ENCODE measurements at regions of chr18 and their contacts with region 1.

Region 1: DNA sequence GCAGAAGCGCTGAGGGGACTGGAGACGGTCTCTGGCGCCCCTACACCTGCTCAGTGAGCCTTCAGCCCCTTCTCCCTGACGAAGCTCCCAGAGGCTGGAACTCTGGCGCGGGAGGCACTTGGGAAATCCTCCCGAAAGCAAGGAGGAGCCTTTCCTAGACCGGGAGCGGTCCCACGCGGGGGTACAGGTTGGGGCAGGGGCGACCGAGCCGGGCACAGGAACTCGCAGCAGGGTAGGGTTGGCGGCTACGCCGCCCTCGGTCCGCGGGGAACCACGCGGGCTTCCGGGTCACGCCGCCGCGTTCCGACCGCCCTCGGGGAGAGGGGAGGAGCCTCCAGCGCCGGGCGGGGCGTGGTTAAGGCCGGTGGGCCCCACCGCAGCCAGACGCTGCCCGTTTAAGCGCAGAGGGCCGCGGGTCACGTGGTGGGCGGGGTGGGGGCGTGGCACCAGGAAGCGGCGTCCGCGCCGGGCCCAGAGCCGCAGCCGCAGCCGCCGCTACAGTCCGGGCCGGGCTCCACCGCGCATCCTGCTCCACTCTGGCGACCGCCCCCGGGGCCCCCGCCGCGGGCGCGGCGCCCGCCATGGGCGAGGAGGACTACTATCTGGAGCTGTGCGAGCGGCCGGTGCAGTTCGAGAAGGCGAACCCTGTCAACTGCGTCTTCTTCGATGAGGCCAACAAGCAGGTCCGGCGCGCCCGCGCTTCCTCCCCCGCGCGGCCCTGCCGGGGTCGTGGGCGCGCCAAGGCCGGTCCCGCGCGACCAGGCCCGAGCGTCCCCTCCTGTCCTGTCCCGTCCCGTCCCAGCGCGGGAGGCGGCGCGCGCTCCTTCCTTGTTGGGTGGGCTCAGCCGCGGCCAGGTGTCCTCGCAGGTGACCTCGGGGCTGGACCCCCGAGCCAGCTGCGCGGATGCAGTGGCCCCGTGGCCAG is at the start of gene RMC1:
- DNase-seq: peak; percentile 91 to 99 (median 95)
- ATAC-seq: peak; percentile 96
- H3K4me3 ChIP-seq: peak within 1 kb of the TSS; percentile 95
- H3K4me3 Mint-ChIP-seq: peak within 1 kb of the TSS; percentile 91 to 99 (median 96)
- H3K27ac ChIP-seq: peak within 1 kb of the TSS; percentile 88
- H3K27ac Mint-ChIP-seq: peak within 1 kb of the TSS; percentile 93 to 99 (median 96)
- H3K4me1 ChIP-seq: peaks cover 22% of the 10 kb centered on the region in 2 donors
- H3K4me1 Mint-ChIP-seq: peaks cover 28 to 70% (median 64%) of the 10 kb centered on the region in 7 donors
- H3K27me3 ChIP-seq: no peaks in the 10 kb centered on the region
- H3K27me3 Mint-ChIP-seq: no peaks in the 10 kb centered on the region
- total RNA-seq, gene RMC1: 45.7 to 59.7 (median 50.0) TPM

Region 2: DNA sequence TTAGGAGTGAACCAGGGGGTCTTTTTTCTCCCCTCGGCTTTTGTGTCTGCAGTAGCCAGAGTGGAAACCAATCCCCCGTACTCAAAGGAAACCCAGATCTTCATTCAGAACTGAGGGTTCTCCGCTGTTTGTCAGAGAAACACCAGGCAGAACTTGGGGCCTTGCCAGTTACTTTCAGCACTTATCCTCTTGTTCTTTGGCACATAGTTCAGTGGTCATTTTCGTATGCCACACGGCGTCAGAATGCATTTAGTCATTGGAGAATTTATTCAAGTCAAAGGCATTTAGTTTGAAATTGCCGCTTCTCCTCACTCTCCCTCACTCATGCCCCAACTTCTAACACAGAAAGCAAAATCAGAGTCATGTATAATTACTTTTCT is 265.2 kb before region 1 on chr18:
- CTCF ChIA-PET with region 1: no interaction called
- POLR2A ChIA-PET with region 1: no interaction called
- intact Hi-C with region 1: no loop called
- DNase-seq: no peak
- ATAC-seq: no peak
- H3K4me3 ChIP-seq: peak overlapping the region; percentile 30
- H3K4me3 Mint-ChIP-seq: peak overlapping the region; percentile 61 to 90 (median 82)
- H3K27ac ChIP-seq: peak overlapping the region; percentile 53
- H3K27ac Mint-ChIP-seq: peak overlapping the region in 8 of 9 donors; percentile 60 to 97 (median 82)
- H3K4me1 ChIP-seq: peaks cover 4 to 11% of the 10 kb centered on the region in 2 donors
- H3K4me1 Mint-ChIP-seq: peaks cover 4 to 68% (median 17%) of the 10 kb centered on the region in 7 donors
- H3K27me3 ChIP-seq: no peaks in the 10 kb centered on the region
- H3K27me3 Mint-ChIP-seq: no peaks in the 10 kb centered on the region

Region 3: GRCh38 chr18:23291456-23292205 is 211.7 kb before region 1 on chr18:
- CTCF ChIA-PET with region 1: no interaction called
- POLR2A ChIA-PET with region 1: no interaction called
- intact Hi-C with region 1: no loop called
- DNase-seq: no peak
- ATAC-seq: no peak
- H3K4me3 ChIP-seq: no peak overlapping the region
- H3K4me3 Mint-ChIP-seq: no peak overlapping the region
- H3K27ac ChIP-seq: no peak overlapping the region
- H3K27ac Mint-ChIP-seq: no peak overlapping the region
- H3K4me1 ChIP-seq: no peaks in the 10 kb centered on the region
- H3K4me1 Mint-ChIP-seq: no peaks in the 10 kb centered on the region
- H3K27me3 ChIP-seq: no peaks in the 10 kb centered on the region
- H3K27me3 Mint-ChIP-seq: no peaks in the 10 kb centered on the region

Region 4: DNA sequence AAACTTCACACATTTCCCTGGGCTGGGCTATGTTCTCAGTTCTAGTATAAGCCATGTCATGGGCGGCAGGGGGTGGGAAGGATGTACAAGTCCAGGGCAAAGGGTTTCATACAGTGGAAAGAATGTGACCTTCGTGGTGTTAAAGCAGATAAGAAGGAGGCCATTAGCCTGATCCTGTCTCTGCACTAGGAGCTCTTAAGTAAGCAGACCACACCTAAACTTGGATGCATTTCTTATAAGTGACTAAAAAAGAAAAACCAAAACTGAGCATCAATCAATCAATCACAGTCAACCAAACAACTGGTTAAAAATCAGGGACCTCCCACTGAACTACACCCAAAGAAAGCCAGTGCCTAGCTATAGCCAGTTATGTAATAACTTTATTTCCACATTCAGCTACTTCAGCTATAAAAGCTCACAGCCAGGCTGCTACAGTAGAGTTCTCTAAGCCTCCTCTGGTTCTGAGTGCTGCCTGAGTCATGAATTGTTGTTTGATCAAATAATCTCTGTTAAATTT is 97.0 kb before region 1 on chr18:
- CTCF ChIA-PET with region 1: no interaction called
- POLR2A ChIA-PET with region 1: no interaction called
- intact Hi-C with region 1: loop called in 1 of 2 experiments (anchors 1 kb)
- DNase-seq: no peak
- ATAC-seq: no peak
- H3K4me3 ChIP-seq: no peak overlapping the region
- H3K4me3 Mint-ChIP-seq: no peak overlapping the region
- H3K27ac ChIP-seq: no peak overlapping the region
- H3K27ac Mint-ChIP-seq: no peak overlapping the region
- H3K4me1 ChIP-seq: no peaks in the 10 kb centered on the region
- H3K4me1 Mint-ChIP-seq: peaks cover 0 to 7% (median 1%) of the 10 kb centered on the region in 7 donors
- H3K27me3 ChIP-seq: no peaks in the 10 kb centered on the region
- H3K27me3 Mint-ChIP-seq: no peaks in the 10 kb centered on the region

Region 5: GRCh38 chr18:23515911-23516546 is 12.7 kb after region 1 on chr18:
- CTCF ChIA-PET with region 1: interaction called, 10 read pairs
- POLR2A ChIA-PET with region 1: interaction called, 3 read pairs
- intact Hi-C with region 1: loop called (anchors 1 kb)
- DNase-seq: peak; percentile 39 to 76 (median 69)
- ATAC-seq: peak; percentile 99
- H3K4me3 ChIP-seq: no peak overlapping the region
- H3K4me3 Mint-ChIP-seq: no peak overlapping the region
- H3K27ac ChIP-seq: no peak overlapping the region
- H3K27ac Mint-ChIP-seq: peak overlapping the region; percentile 1 to 81 (median 66)
- H3K4me1 ChIP-seq: peaks cover 0 to 6% of the 10 kb centered on the region in 2 donors
- H3K4me1 Mint-ChIP-seq: peaks cover 7 to 37% (median 13%) of the 10 kb centered on the region in 7 donors
- H3K27me3 ChIP-seq: no peaks in the 10 kb centered on the region
- H3K27me3 Mint-ChIP-seq: no peaks in the 10 kb centered on the region

Region 6: GRCh38 chr18:23710068-23710527 is 206.8 kb after region 1 on chr18:
- CTCF ChIA-PET with region 1: no interaction called
- POLR2A ChIA-PET with region 1: no interaction called
- intact Hi-C with region 1: loop called in 1 of 2 experiments (anchors 5 kb)
- DNase-seq: no peak
- ATAC-seq: no peak
- H3K4me3 ChIP-seq: no peak overlapping the region
- H3K4me3 Mint-ChIP-seq: no peak overlapping the region
- H3K27ac ChIP-seq: no peak overlapping the region
- H3K27ac Mint-ChIP-seq: no peak overlapping the region
- H3K4me1 ChIP-seq: peaks cover 6 to 12% of the 10 kb centered on the region in 2 donors
- H3K4me1 Mint-ChIP-seq: peaks cover 13 to 24% (median 17%) of the 10 kb centered on the region in 7 donors
- H3K27me3 ChIP-seq: no peaks in the 10 kb centered on the region
- H3K27me3 Mint-ChIP-seq: peaks cover 0 to 30% (median 6%) of the 10 kb centered on the region in 5 donors

Region 7: DNA sequence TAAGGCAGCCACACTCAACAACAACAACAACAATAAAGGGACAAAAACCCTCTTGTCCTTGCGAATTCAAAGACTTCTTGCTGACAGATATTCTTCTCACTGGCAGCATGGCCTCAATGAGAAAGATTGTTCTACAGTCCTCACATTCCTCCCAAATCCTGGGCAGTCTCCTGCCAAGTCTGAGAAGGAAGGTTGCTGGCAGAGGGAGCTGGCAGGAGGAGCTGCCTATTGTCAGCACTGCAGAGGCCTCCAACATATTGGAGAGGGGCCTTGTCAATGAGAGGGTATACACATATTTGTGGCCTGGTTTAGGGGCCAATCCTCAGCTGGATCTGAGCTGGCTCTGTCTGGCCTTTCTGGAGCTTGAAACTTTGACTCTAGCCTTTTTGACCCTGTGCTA is 249.5 kb after region 1 on chr18:
- CTCF ChIA-PET with region 1: no interaction called
- POLR2A ChIA-PET with region 1: no interaction called
- intact Hi-C with region 1: no loop called
- DNase-seq: no peak
- ATAC-seq: no peak
- H3K4me3 ChIP-seq: no peak overlapping the region
- H3K4me3 Mint-ChIP-seq: no peak overlapping the region
- H3K27ac ChIP-seq: no peak overlapping the region
- H3K27ac Mint-ChIP-seq: no peak overlapping the region
- H3K4me1 ChIP-seq: no peaks in the 10 kb centered on the region
- H3K4me1 Mint-ChIP-seq: peaks cover 0 to 6% (median 0%) of the 10 kb centered on the region in 7 donors
- H3K27me3 ChIP-seq: no peaks in the 10 kb centered on the region
- H3K27me3 Mint-ChIP-seq: peaks cover 5 to 33% (median 12%) of the 10 kb centered on the region in 5 donors

Region 8: GRCh38 chr18:24014062-24014985 is 511.0 kb after region 1 on chr18 and contains the start of gene TTC39C:
- CTCF ChIA-PET with region 1: no interaction called
- POLR2A ChIA-PET with region 1: no interaction called
- intact Hi-C with region 1: loop called (anchors 1 to 2 kb)
- DNase-seq: peak; percentile 60 to 90 (median 74)
- ATAC-seq: peak; percentile 71
- H3K4me3 ChIP-seq: peak within 1 kb of the TSS; percentile 86
- H3K4me3 Mint-ChIP-seq: peak within 1 kb of the TSS; percentile 93 to 100 (median 98)
- H3K27ac ChIP-seq: peak within 1 kb of the TSS; percentile 84
- H3K27ac Mint-ChIP-seq: peak within 1 kb of the TSS; percentile 92 to 98 (median 95)
- H3K4me1 ChIP-seq: peaks cover 72 to 80% of the 10 kb centered on the region in 2 donors
- H3K4me1 Mint-ChIP-seq: peaks cover 58 to 84% (median 72%) of the 10 kb centered on the region in 7 donors
- H3K27me3 ChIP-seq: no peaks in the 10 kb centered on the region
- H3K27me3 Mint-ChIP-seq: no peaks in the 10 kb centered on the region
- total RNA-seq, gene TTC39C: 84.1 to 98.8 (median 91.4) TPM

Region 9: DNA sequence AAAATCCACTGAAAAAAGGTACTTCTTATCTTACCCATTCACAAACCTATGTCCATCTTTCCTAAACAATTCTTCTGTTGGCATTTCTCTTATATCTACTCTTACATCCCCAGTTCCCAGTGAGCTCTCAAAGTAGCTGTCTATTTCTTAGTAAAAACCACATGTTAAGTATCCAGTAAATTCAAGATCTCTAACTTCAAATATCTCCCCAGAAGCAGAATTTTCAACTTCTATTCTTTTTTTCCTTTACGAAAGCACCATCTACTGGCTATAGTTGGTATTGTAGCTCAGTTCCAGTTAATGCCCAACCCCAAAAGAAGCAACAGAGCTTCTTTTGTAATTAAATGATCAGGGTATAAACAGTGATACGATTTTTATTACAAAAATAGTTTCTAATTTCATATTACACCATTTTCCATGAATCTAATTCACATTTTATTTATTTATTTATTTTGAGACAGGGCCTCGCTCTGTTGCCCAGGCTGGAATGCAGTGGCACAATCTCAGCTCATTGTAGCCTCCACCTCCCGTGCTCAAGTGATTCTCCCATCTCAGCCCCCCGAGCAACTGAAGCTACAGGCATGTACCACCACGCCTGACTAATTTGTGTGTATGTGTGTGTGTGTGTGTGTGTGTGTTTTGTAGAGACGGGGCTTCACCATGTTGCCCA is 985.7 kb after region 1 on chr18:
- CTCF ChIA-PET with region 1: no interaction called
- POLR2A ChIA-PET with region 1: no interaction called
- intact Hi-C with region 1: loop called in 1 of 2 experiments (anchors 5 kb)
- DNase-seq: peak in 5 of 9 donors; percentile 31 to 45 (median 38)
- ATAC-seq: peak; percentile 59
- H3K4me3 ChIP-seq: no peak overlapping the region
- H3K4me3 Mint-ChIP-seq: no peak overlapping the region
- H3K27ac ChIP-seq: no peak overlapping the region
- H3K27ac Mint-ChIP-seq: peak overlapping the region in 1 of 9 donors; percentile 8
- H3K4me1 ChIP-seq: peaks cover 0 to 17% of the 10 kb centered on the region in 2 donors
- H3K4me1 Mint-ChIP-seq: peaks cover 4 to 11% (median 5%) of the 10 kb centered on the region in 7 donors
- H3K27me3 ChIP-seq: no peaks in the 10 kb centered on the region
- H3K27me3 Mint-ChIP-seq: peaks cover 6 to 34% (median 19%) of the 10 kb centered on the region in 5 donors

Region 10: GRCh38 chr18:25443776-25444175 is 1940.5 kb after region 1 on chr18:
- CTCF ChIA-PET with region 1: no interaction called
- POLR2A ChIA-PET with region 1: no interaction called
- intact Hi-C with region 1: no loop called
- DNase-seq: no peak
- ATAC-seq: no peak
- H3K4me3 ChIP-seq: no peak overlapping the region
- H3K4me3 Mint-ChIP-seq: no peak overlapping the region
- H3K27ac ChIP-seq: no peak overlapping the region
- H3K27ac Mint-ChIP-seq: no peak overlapping the region
- H3K4me1 ChIP-seq: no peaks in the 10 kb centered on the region
- H3K4me1 Mint-ChIP-seq: peaks cover 0 to 1% (median 0%) of the 10 kb centered on the region in 7 donors
- H3K27me3 ChIP-seq: no peaks in the 10 kb centered on the region
- H3K27me3 Mint-ChIP-seq: peaks cover 0 to 5% (median 0%) of the 10 kb centered on the region in 5 donors

Measured in naive thymus-derived CD4-positive, alpha-beta T cell (primary cell).